ENCODE measurements at regions of chr19 and their contacts with region 1.

Region 1: DNA sequence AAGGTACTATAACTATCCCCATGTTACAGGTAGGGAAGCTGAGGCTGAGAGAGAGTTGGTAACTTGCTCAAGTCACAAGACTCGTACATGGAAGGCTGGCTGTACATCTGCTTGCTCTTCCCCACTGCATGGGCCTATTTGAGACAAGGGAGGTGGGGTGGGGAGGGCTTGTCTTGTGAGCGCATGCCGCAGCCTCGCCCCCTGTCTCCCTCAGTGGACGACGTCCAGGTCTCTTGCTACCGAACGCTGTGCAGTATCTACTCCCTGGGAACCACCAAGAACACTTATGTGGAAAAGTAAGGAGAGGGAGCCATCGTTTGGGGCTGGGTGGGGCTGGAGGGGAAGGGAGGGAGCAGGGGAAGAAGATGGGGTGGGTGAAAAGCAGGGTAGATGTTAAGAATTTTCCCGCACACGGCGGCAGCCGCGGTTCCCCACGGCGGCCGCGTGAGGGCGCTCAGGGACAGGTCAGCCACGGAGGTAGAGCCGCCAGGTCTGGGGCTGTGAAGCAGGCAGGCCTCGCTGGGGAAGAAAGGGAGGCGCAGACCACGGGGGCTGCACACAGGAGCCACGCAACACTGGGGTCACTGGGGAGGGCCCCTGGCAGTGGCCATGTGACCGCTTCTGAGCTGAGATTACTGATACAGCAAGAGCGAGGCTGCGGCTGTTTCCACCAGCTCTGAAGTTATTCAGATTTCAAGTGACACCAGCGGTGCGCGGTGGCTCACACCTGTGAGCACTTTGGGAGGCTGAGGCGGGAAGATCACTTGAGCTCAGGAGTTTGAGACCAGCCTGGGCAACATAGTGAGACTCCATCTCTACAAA is 81.5 kb downstream of the RYR1 start:
- DNase-seq: peak; percentile 81
- ATAC-seq: peak; percentile 84
- H3K4me3 Mint-ChIP-seq: no peak overlapping the region
- H3K27ac Mint-ChIP-seq: peak overlapping the region; percentile 15
- H3K4me1 Mint-ChIP-seq: peaks cover 29% of the 10 kb centered on the region
- H3K27me3 Mint-ChIP-seq: peaks cover 21% of the 10 kb centered on the region

Region 2: DNA sequence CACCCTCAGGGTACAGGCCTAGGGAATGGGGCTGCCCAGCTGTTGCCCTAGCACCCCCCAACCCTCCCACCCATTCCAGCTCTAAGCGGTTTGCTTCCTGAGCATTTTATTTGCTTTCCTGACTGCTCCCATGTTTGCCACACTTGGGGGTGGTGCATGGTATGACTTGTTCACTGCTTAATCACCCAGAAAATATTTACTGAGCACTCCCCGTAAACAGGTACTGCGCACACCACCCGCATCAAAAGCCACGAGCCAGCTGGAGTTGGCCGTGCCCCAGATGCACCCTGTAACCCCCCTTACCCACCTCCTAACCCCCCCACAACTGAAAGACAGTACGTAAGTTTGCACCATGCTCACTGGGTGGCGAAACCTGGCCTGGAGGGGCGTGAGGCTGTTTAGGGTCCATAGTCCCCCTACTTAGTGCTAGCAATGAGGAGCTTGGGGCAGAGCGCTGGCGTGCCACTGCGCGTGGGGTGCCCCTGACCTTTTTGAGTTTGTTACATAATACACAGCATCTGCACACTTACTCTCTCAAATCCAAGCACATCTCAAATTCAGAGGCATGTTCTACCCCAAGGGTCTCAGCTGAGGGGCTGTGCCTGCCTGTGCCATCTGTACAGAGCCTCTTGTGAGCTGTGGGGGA is 320.8 kb before region 1 on chr19:
- CTCF ChIA-PET with region 1: no interaction called
- DNase-seq: no peak
- ATAC-seq: no peak
- H3K4me3 Mint-ChIP-seq: no peak overlapping the region
- H3K27ac Mint-ChIP-seq: no peak overlapping the region
- H3K4me1 Mint-ChIP-seq: peaks cover 1% of the 10 kb centered on the region
- H3K27me3 Mint-ChIP-seq: no peaks in the 10 kb centered on the region

Region 3: GRCh38 chr19:38528213-38528755 is 13.3 kb after region 1 on chr19:
- CTCF ChIA-PET with region 1: interaction called, 20 read pairs
- DNase-seq: no peak
- ATAC-seq: no peak
- H3K4me3 Mint-ChIP-seq: no peak overlapping the region
- H3K27ac Mint-ChIP-seq: no peak overlapping the region
- H3K4me1 Mint-ChIP-seq: no peaks in the 10 kb centered on the region
- H3K27me3 Mint-ChIP-seq: peaks cover 4% of the 10 kb centered on the region

Region 4: GRCh38 chr19:38538793-38539528 is 23.9 kb after region 1 on chr19:
- CTCF ChIA-PET with region 1: interaction called, 13 read pairs
- DNase-seq: peak; percentile 62
- ATAC-seq: peak; percentile 91
- H3K4me3 Mint-ChIP-seq: peak overlapping the region; percentile 15
- H3K27ac Mint-ChIP-seq: peak overlapping the region; percentile 94
- H3K4me1 Mint-ChIP-seq: peaks cover 32% of the 10 kb centered on the region
- H3K27me3 Mint-ChIP-seq: peaks cover 9% of the 10 kb centered on the region

Region 5: DNA sequence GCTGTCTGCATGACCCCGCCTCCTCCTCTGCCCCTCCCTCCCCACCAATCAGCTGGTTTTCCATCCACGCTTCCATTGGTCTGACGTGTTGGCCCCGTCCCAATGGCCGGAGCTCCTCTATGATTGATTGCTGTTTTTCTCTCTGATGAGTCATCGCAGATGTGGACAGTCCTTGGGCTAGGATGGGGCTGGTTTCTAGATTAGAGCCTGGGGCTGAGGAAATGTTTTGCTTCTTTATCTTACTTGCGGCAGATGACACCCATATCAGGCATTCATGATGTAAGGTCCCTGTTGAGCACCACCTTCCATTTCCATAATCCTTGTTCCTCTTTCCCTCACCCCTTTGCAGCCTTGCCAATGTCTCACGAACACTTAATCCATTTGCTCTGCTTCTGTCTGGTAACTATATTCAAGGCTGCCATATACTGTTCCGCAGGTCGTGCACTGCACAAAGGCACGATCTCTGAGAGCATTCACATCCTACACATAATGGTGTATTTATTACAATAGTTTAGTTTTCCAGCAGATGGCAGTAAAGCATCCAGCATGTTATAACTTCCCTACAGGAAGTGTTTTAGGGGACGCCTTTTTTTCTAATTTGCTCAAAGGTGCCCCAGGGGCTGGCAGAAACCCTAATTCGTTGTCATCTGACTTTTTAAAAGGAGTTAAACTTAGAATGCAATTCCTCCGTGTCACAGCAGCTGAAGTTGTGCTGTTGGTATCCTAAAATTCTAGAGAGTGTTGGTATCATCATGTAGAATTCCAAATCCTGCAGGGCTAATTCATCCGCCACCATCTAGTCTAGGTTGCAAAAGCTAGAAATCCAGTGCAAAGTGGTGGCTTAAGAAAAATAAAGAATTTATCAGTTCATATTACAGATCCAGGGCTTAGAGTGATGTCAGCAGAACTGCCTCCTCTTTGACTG is 29.3 kb after region 1 on chr19:
- CTCF ChIA-PET with region 1: interaction called, 13 read pairs
- DNase-seq: peak; percentile 64
- ATAC-seq: peak; percentile 93
- H3K4me3 Mint-ChIP-seq: peak overlapping the region; percentile 19
- H3K27ac Mint-ChIP-seq: peak overlapping the region; percentile 71
- H3K4me1 Mint-ChIP-seq: peaks cover 28% of the 10 kb centered on the region
- H3K27me3 Mint-ChIP-seq: no peaks in the 10 kb centered on the region

Region 6: GRCh38 chr19:38577826-38578225 is 62.8 kb after region 1 on chr19:
- CTCF ChIA-PET with region 1: no interaction called
- DNase-seq: no peak
- ATAC-seq: no peak
- H3K4me3 Mint-ChIP-seq: no peak overlapping the region
- H3K27ac Mint-ChIP-seq: no peak overlapping the region
- H3K4me1 Mint-ChIP-seq: peaks cover 16% of the 10 kb centered on the region
- H3K27me3 Mint-ChIP-seq: no peaks in the 10 kb centered on the region

Measured in activated CD8-positive, alpha-beta memory T cell treated with anti-CD3 and anti-CD28 coated beads, Interleukin-2, amount 10 ng/mL, durations not matched to agents 7 days and 5 days (primary cell).